Activated CD8-positive, alpha-beta T cell treated with anti-CD3 and anti-CD28 coated beads, Interleukin-2, amount 10 ng/mL, durations not matched to agents 7 days and 5 days (primary cell): ENCODE measurements at regions of chrX and their contacts with region 1.

Region 1: GRCh38 chrX:79096145-79096556 is 48.3 kb upstream of the GPR174 start:
- DNase-seq: peak; percentile 27
- ATAC-seq: peak; percentile 72
- H3K4me3 Mint-ChIP-seq: peak overlapping the region; percentile 60
- H3K27ac Mint-ChIP-seq: peak overlapping the region; percentile 90
- H3K4me1 Mint-ChIP-seq: peaks cover 69% of the 10 kb centered on the region
- H3K27me3 Mint-ChIP-seq: no peaks in the 10 kb centered on the region

Region 2: DNA sequence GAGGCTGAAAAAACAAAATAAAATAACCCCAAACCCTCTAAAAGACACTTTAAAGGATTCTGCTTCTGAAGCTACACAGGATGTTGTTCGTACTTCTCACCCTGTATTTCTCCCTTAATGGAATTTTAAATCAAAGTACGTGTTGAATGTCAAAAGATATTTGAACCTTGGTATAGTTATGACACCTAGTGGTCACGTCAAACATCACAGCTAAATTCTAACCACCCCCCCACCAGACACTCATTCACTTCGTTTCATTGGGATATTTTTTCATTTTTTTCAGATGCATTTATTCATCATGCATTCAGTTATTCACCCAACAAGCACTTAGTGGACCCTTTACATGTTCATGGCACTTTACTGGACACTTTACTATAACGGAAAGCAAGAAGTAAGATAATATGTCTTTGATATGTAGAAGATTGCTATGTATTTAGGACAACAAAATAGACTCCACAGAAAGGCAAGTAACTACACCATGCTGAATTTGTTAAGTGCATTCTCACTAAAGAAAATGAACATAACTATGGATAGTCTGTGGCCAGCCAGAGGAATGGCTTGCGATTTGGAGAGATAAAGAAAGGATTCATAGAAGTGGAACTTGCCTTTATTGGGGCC is 14.1 kb before region 1 on chrX:
- CTCF ChIA-PET with region 1: interaction called, 11 read pairs
- POLR2A ChIA-PET with region 1: no interaction called
- DNase-seq: peak; percentile 49
- ATAC-seq: peak; percentile 73
- H3K4me3 Mint-ChIP-seq: peak overlapping the region; percentile 70
- H3K27ac Mint-ChIP-seq: peak overlapping the region; percentile 71
- H3K4me1 Mint-ChIP-seq: peaks cover 31% of the 10 kb centered on the region
- H3K27me3 Mint-ChIP-seq: no peaks in the 10 kb centered on the region

Region 3: DNA sequence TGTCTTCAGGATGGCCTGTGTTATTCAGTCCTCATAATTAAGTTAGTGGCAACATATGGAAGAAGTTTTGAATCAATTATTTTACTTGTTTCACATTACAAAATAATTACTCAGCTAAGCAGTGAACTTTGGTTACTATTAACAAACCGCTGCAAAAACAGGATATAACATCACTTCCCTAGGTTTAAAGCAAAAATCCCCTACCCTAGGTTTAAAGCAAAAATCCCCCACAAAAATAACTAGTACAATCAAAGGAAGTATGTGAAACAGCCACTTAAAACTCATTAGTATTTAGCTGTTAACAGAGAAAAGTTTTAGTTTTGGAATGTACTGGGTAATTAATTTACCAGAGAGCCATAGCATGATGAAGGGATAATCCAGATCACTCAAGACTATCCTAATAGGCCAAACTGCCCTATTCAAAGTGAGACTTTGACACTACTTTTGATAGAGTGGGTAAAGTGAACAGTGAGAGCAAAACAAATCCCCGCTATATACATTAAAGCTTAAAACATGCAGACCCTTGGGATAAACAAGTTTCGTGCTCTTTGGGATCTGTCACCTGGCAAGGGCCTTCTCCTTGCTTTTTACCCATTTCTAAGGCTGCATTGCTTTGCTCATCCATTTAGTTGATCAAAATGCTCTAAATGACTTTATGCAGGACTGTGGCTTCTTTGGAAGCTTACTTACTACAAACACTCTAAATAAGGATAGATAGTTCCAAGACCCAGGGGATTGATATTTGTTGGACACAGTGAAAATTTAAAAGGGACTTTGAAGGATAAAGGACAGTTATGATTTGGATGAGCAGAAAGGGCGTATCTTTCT is 12.0 kb after region 1 on chrX:
- CTCF ChIA-PET with region 1: interaction called, 5 read pairs
- POLR2A ChIA-PET with region 1: interaction called, 18 read pairs
- DNase-seq: no peak
- ATAC-seq: peak; percentile 81
- H3K4me3 Mint-ChIP-seq: peak overlapping the region; percentile 62
- H3K27ac Mint-ChIP-seq: peak overlapping the region; percentile 91
- H3K4me1 Mint-ChIP-seq: peaks cover 41% of the 10 kb centered on the region
- H3K27me3 Mint-ChIP-seq: no peaks in the 10 kb centered on the region